B cell (primary cell): ENCODE measurements at regions of chr1 and their contacts with region 1.

Region 1: GRCh38 chr1:212414328-212415106 is at the start of gene PACC1:
- DNase-seq: peak; percentile 98
- ATAC-seq: peak; percentile 98
- H3K4me3 ChIP-seq: peak within 1 kb of the TSS; percentile 64 to 93 (median 83)
- H3K4me3 Mint-ChIP-seq: peak within 1 kb of the TSS; percentile 99
- H3K27ac ChIP-seq: peak within 1 kb of the TSS; percentile 83 to 84
- H3K27ac Mint-ChIP-seq: peak within 1 kb of the TSS; percentile 86
- H3K4me1 ChIP-seq: peaks cover 24 to 35% of the 10 kb centered on the region in 2 donors
- H3K4me1 Mint-ChIP-seq: peaks cover 39% of the 10 kb centered on the region
- H3K27me3 ChIP-seq: no peaks in the 10 kb centered on the region
- H3K27me3 Mint-ChIP-seq: no peaks in the 10 kb centered on the region
- CTCF ChIP-seq: no peak
- total RNA-seq, gene PACC1: 16.7 and 18.3 TPM in 2 replicates

Region 2: DNA sequence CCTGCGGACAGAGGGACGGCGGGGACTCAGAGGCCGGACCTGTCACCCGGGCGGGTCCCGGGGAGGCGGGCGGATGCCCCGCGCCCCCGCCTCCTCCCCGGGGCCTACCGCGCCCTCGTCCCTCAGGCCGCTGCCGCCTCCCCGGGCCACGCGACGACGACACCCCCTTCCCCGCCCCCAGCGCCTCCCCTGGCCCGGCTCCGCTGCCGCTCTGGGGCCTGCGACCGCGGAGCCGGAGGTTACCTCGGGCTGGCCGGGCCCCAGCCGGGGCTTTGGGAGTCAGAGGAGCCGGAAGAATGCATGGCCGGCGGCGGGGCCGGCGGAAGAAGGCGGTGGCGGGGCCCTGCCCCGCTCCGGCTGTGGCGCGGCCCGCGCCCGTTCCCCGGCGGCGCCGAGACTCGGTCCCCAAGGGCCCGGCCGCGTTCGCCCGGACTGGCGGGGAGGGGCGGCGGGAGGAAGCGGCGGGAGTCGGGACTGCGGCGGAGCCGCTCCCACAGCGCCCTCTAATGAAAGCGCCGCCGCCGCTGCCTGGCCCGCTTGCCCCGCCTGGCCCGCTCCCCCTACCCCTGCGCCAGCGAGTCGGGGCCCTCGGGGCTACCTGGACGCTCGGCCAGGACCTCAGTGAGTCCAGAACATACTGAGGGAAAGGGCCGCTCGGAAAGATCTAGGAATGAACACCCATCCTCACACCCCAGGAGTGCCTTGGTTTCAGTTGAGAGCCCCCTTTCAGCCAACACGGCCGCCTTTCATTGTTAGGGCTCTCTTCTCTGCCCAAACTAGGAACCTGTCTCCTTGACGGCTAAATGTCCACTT is 584.0 kb before region 1 on chr1 and contains the start of gene LPGAT1:
- CTCF ChIA-PET with region 1: no interaction called
- POLR2A ChIA-PET with region 1: no interaction called
- intact Hi-C with region 1: loop called (anchors 5 kb)
- DNase-seq: peak; percentile 86
- ATAC-seq: peak; percentile 85
- H3K4me3 ChIP-seq: peak within 1 kb of the TSS; percentile 48 to 85 (median 72)
- H3K4me3 Mint-ChIP-seq: peak within 1 kb of the TSS; percentile 94
- H3K27ac ChIP-seq: peak within 1 kb of the TSS; percentile 39 to 80
- H3K27ac Mint-ChIP-seq: peak within 1 kb of the TSS; percentile 91
- H3K4me1 ChIP-seq: peaks cover 44 to 49% of the 10 kb centered on the region in 2 donors
- H3K4me1 Mint-ChIP-seq: peaks cover 58% of the 10 kb centered on the region
- H3K27me3 ChIP-seq: no peaks in the 10 kb centered on the region
- H3K27me3 Mint-ChIP-seq: no peaks in the 10 kb centered on the region
- CTCF ChIP-seq: peak; percentile 76
- total RNA-seq, gene LPGAT1: 60.1 and 63.8 TPM in 2 replicates

Region 3: GRCh38 chr1:212368073-212368484 is 46.4 kb before region 1 on chr1:
- CTCF ChIA-PET with region 1: interaction called, 5 read pairs
- POLR2A ChIA-PET with region 1: no interaction called
- intact Hi-C with region 1: loop called (anchors 1 kb)
- DNase-seq: peak; percentile 72
- ATAC-seq: peak; percentile 80
- H3K4me3 ChIP-seq: no peak overlapping the region
- H3K4me3 Mint-ChIP-seq: no peak overlapping the region
- H3K27ac ChIP-seq: no peak overlapping the region
- H3K27ac Mint-ChIP-seq: no peak overlapping the region
- H3K4me1 ChIP-seq: no peaks in the 10 kb centered on the region
- H3K4me1 Mint-ChIP-seq: peaks cover 2% of the 10 kb centered on the region
- H3K27me3 ChIP-seq: no peaks in the 10 kb centered on the region
- H3K27me3 Mint-ChIP-seq: no peaks in the 10 kb centered on the region
- CTCF ChIP-seq: peak; percentile 86

Region 4: GRCh38 chr1:212432706-212433576 is 18.4 kb after region 1 on chr1 and contains the start of gene NENF:
- CTCF ChIA-PET with region 1: interaction called, 3 read pairs
- POLR2A ChIA-PET with region 1: interaction called, 5 read pairs
- intact Hi-C with region 1: loop called (anchors 1 kb)
- DNase-seq: peak; percentile 81
- ATAC-seq: peak; percentile 99
- H3K4me3 ChIP-seq: peak within 1 kb of the TSS; percentile 26 to 82 (median 58)
- H3K4me3 Mint-ChIP-seq: peak within 1 kb of the TSS; percentile 82
- H3K27ac ChIP-seq: peak within 1 kb of the TSS in 1 of 2 donors; percentile 65
- H3K27ac Mint-ChIP-seq: peak within 1 kb of the TSS; percentile 33
- H3K4me1 ChIP-seq: peaks cover 12 to 15% of the 10 kb centered on the region in 2 donors
- H3K4me1 Mint-ChIP-seq: peaks cover 25% of the 10 kb centered on the region
- H3K27me3 ChIP-seq: no peaks in the 10 kb centered on the region
- H3K27me3 Mint-ChIP-seq: no peaks in the 10 kb centered on the region
- CTCF ChIP-seq: no peak
- total RNA-seq, gene NENF: 20.3 and 22.7 TPM in 2 replicates

Region 5: DNA sequence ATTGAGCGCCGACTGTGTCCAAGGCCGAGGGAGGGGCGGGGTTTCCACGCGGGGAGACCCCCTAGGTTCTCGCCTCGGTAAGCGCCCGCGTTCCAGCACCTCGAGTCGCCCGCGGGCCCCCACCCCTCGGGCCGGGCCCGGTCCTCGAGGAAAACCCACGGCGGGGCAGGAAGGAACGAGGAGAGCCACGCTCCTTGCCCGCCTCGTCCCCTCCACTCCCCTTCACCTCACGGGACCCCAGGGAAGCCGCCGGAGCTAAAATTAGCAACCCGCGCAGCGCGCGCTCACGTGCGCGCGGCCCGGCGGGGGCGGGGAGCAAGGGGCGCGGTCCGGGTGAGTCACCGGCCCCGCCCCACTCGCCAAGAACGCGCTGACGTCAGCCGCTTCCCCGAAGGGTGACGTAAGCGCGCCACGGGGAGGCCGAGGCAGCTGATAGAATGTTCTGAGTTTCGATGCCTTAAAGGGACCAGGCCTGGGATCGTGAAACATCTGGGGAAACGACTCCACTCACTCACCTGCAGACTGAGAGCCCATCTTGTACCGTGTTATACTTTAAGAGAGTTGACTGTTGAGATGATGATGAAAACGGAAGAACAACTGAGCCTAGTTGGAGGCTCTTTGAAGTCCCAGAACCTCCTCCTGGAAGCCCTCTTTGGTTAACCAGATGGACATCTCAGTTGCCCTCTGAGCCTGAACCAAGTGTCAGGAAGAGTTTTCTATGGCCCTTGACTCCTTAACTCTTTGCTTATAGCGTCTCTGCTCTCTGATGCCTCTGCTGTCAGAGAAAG is 144.4 kb after region 1 on chr1:
- CTCF ChIA-PET with region 1: no interaction called
- POLR2A ChIA-PET with region 1: no interaction called
- intact Hi-C with region 1: loop called (anchors 2 kb)
- DNase-seq: peak; percentile 97
- ATAC-seq: peak; percentile 92
- H3K4me3 ChIP-seq: peak overlapping the region; percentile 36 to 89 (median 73)
- H3K4me3 Mint-ChIP-seq: peak overlapping the region; percentile 90
- H3K27ac ChIP-seq: peak overlapping the region; percentile 95 to 96
- H3K27ac Mint-ChIP-seq: peak overlapping the region; percentile 96
- H3K4me1 ChIP-seq: peaks cover 12% of the 10 kb centered on the region in 2 donors
- H3K4me1 Mint-ChIP-seq: peaks cover 13% of the 10 kb centered on the region
- H3K27me3 ChIP-seq: peaks cover 0 to 5% (median 0%) of the 10 kb centered on the region in 4 experiments
- H3K27me3 Mint-ChIP-seq: peaks cover 4% of the 10 kb centered on the region
- CTCF ChIP-seq: no peak

Region 6: DNA sequence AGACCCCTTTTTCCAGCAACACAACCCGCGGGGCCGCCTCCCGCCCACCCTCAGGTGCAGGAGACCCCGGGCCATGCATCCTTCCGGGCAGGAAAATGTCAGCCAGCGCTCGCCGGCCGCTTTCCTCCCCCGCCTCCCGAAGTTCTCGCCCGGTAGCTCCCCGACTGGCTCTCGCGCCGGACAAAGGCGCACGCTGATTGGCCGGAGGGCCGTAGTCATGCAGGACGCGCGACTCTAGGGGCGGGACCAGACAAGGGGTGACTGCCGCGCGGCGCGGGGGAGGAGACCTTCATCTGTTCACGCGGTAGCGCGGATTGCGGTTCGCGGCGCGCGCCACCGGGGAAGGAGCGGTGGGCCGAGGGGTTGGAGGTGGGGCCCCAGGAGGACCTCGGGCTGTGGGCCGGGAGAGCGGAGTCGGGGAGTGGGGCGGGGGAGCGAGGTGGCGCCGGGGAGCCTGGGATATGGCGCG is 443.5 kb after region 1 on chr1 and contains the start of gene FLVCR1:
- CTCF ChIA-PET with region 1: no interaction called
- POLR2A ChIA-PET with region 1: no interaction called
- intact Hi-C with region 1: loop called (anchors 5 kb)
- DNase-seq: peak; percentile 93
- ATAC-seq: peak; percentile 98
- H3K4me3 ChIP-seq: peak within 1 kb of the TSS; percentile 71 to 96 (median 82)
- H3K4me3 Mint-ChIP-seq: peak within 1 kb of the TSS; percentile 95
- H3K27ac ChIP-seq: peak within 1 kb of the TSS; percentile 51 to 85
- H3K27ac Mint-ChIP-seq: peak within 1 kb of the TSS; percentile 96
- H3K4me1 ChIP-seq: peaks cover 25 to 32% of the 10 kb centered on the region in 2 donors
- H3K4me1 Mint-ChIP-seq: peaks cover 22% of the 10 kb centered on the region
- H3K27me3 ChIP-seq: no peaks in the 10 kb centered on the region
- H3K27me3 Mint-ChIP-seq: no peaks in the 10 kb centered on the region
- CTCF ChIP-seq: no peak
- total RNA-seq, gene FLVCR1: 19.2 and 19.7 TPM in 2 replicates

Region 7: GRCh38 chr1:213015099-213016050 is 600.9 kb after region 1 on chr1 and contains the start of gene ANGEL2:
- CTCF ChIA-PET with region 1: no interaction called
- POLR2A ChIA-PET with region 1: no interaction called
- intact Hi-C with region 1: loop called (anchors 1 kb)
- DNase-seq: peak; percentile 97
- ATAC-seq: peak; percentile 96
- H3K4me3 ChIP-seq: peak within 1 kb of the TSS; percentile 65 to 89 (median 77)
- H3K4me3 Mint-ChIP-seq: peak within 1 kb of the TSS; percentile 98
- H3K27ac ChIP-seq: peak within 1 kb of the TSS; percentile 81 to 92
- H3K27ac Mint-ChIP-seq: peak within 1 kb of the TSS; percentile 99
- H3K4me1 ChIP-seq: peaks cover 7 to 14% of the 10 kb centered on the region in 2 donors
- H3K4me1 Mint-ChIP-seq: peaks cover 31% of the 10 kb centered on the region
- H3K27me3 ChIP-seq: no peaks in the 10 kb centered on the region
- H3K27me3 Mint-ChIP-seq: no peaks in the 10 kb centered on the region
- CTCF ChIP-seq: no peak
- total RNA-seq, gene ANGEL2: 86.0 and 94.2 TPM in 2 replicates